Activated T-helper 1 cell treated with anti-CD3 and anti-CD28 coated beads, Interleukin-12 subunit alpha, Interleukin-12 subunit beta, Interleukin-2, Interleukin-4 antibody, amounts not matched to agents 30 ng/mL and 10 ng/mL and 1 ng/mL, durations not matched to agents 14 hours and 24 hours and 36 hours (primary cell): ENCODE measurements at regions of chr3 and their contacts with region 1.

Region 1: GRCh38 chr3:56556908-56557830 is at the start of gene CCDC66:
- DNase-seq: peak; percentile 90
- H3K4me3 Mint-ChIP-seq: peak within 1 kb of the TSS; percentile 97
- H3K27ac Mint-ChIP-seq: peak within 1 kb of the TSS; percentile 99
- H3K4me1 Mint-ChIP-seq: peaks cover 38% of the 10 kb centered on the region
- H3K27me3 Mint-ChIP-seq: peaks cover 23% of the 10 kb centered on the region
- total RNA-seq, gene CCDC66: 37.7 and 40.4 TPM in 2 replicates

Region 2: DNA sequence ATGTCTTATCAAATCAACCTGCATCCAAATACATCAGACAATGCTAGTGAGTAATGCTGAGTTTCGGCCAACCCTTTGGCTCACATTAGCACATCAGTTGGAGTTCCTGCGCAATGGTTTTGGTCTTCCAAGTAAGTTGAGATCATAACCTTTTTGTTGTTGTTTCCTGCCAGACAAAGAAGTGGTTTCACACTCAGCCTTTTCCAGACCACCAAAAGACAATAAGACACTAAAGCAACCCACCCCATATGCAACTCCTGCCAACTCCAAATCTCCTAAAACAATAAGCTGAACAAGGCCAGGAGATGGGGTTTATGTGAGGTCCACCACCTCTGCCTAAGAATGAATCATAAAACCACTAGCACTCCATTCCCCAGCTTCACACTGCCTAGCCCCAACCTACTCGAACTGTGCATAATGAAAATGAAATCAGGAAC is 265.9 kb before region 1 on chr3:
- intact Hi-C with region 1: loop called (anchors 5 kb)
- DNase-seq: peak; percentile 14
- H3K4me3 Mint-ChIP-seq: peak overlapping the region; percentile 40
- H3K27ac Mint-ChIP-seq: peak overlapping the region; percentile 59
- H3K4me1 Mint-ChIP-seq: peaks cover 31% of the 10 kb centered on the region
- H3K27me3 Mint-ChIP-seq: peaks cover 5% of the 10 kb centered on the region

Region 3: DNA sequence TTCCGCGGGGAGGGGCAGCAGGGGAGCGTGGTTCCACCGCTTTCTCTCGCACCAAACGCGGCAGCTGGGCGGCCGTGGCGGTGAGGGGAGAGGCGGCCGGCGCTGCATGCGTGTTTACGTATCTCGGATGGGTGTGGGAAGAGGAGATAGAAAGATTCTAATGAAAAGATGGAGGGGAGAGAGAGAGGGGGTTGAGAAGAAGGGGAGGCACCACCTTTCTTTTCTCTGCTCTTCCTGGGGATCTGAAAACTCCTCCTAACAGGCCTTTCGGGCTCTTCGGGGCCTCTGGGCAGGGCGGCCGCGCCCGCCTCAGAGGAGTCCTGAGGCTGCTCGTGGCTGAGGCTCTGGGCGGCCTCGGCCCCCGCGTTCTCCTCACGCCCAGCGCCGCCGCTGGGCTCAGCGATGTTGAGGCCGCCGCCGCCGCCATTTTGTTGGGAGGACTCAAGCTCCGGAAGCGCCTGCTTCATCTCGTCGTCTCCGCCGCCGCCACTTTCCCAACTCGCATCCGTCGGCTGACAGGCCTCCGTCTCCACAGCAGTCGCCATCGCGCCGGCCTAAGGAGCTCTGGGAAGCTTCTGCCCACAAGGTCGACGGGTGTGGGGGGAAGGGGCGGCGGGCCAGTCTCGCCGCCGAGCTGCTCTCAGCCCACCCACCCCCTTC is 125.4 kb after region 1 on chr3:
- intact Hi-C with region 1: loop called (anchors 1 kb)
- DNase-seq: peak; percentile 77
- H3K4me3 Mint-ChIP-seq: peak overlapping the region; percentile 97
- H3K27ac Mint-ChIP-seq: peak overlapping the region; percentile 96
- H3K4me1 Mint-ChIP-seq: peaks cover 45% of the 10 kb centered on the region
- H3K27me3 Mint-ChIP-seq: peaks cover 2% of the 10 kb centered on the region

Region 4: GRCh38 chr3:56783644-56784447 is 226.7 kb after region 1 on chr3:
- intact Hi-C with region 1: loop called (anchors 10 kb)
- DNase-seq: peak; percentile 72
- H3K4me3 Mint-ChIP-seq: peak overlapping the region; percentile 81
- H3K27ac Mint-ChIP-seq: peak overlapping the region; percentile 95
- H3K4me1 Mint-ChIP-seq: peaks cover 97% of the 10 kb centered on the region
- H3K27me3 Mint-ChIP-seq: no peaks in the 10 kb centered on the region

Region 5: DNA sequence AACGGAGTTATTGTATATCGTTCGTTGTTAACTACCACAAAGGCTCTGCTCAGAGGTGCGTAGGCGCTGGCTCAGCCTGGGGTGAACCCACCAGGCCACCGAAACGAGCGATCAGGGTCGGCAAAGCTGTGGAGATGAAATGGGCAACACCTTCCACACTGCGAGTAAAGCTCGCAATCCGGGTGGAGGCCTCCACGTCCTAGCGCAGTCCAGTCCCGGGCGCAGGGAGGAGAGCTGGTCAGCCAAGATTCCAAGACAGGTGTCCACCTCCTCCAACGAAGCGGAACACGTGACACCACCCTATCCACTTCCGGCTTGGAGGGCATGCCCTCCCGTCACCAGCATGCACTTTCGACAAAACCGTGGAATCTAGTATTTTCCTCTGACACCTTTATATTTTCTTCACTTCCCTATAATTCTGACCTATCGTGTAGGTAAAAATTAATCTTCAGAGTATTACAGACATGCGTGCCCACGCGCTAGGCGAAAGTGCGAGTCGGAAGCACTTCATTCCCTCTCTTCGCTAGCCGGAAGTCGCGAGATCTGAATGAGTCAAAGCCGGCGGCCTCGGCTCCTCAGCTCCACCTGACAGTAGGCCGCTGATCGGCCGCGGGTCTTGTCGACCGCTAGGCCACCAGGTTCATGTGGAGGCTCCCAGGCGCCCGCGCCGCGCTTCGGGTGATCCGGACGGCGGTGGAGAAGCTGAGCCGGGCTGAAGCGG is 998.7 kb after region 1 on chr3 and contains the start of gene PDE12:
- intact Hi-C with region 1: loop called (anchors 1 kb)
- DNase-seq: peak; percentile 78
- H3K4me3 Mint-ChIP-seq: peak within 1 kb of the TSS; percentile 100
- H3K27ac Mint-ChIP-seq: peak within 1 kb of the TSS; percentile 100
- H3K4me1 Mint-ChIP-seq: peaks cover 47% of the 10 kb centered on the region
- H3K27me3 Mint-ChIP-seq: no peaks in the 10 kb centered on the region
- total RNA-seq, gene PDE12: 34.7 and 34.9 TPM in 2 replicates